Aorta (tissue), 5 donors: ENCODE measurements at regions of chr16 and their contacts with region 1.

Region 1: DNA sequence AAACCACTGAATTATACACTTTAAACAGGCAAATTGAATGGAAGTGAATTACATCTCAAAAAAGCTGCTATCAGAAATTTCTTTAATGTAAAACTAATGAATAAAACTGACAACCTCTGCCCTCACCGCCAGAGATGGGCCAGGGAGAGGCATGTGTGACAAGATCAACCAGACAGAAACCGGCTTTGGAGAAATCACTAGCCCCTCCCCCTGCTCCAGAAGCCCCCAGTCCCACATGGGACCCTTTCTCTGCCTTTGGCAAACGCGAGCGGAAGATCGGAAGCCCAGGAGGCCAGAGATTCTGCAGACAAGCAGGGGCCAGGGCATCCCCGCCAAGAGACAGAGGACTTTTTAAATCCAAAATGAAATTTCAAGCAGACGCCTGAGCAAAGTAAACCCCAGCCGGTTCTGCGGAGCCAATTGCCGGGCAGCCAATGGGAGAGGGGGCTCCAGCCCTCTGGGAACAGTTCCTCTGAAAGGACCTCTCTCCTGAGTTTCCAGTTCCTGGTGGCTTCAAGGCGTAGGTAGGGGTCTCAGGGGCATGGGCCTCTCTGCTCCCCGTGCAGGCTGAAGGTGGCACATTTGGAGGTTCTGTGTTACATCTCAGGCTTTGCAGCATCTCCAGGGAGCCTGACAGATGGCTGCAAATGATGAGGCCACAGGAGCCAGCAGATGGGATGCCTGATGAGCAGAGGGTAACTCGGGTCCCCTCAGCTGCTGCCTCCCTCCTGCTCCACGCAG is 118.1 kb downstream of the GSG1L start:
- DNase-seq: peak in 1 of 2 donors; percentile 57
- ATAC-seq: no peak
- H3K4me3 ChIP-seq: no peak overlapping the region
- H3K27ac ChIP-seq: no peak overlapping the region
- H3K4me1 ChIP-seq: no peaks in the 10 kb centered on the region
- H3K27me3 ChIP-seq: no peaks in the 10 kb centered on the region

Region 2: GRCh38 chr16:27879601-27880247 is 65.7 kb before region 1 on chr16:
- intact Hi-C with region 1: loop called in 1 of 2 experiments (anchors 10 kb)
- DNase-seq: no peak
- ATAC-seq: no peak
- H3K4me3 ChIP-seq: no peak overlapping the region
- H3K27ac ChIP-seq: no peak overlapping the region
- H3K4me1 ChIP-seq: no peaks in the 10 kb centered on the region
- H3K27me3 ChIP-seq: no peaks in the 10 kb centered on the region